ENCODE measurements at regions of chr1 and their contacts with region 1.

Region 1: DNA sequence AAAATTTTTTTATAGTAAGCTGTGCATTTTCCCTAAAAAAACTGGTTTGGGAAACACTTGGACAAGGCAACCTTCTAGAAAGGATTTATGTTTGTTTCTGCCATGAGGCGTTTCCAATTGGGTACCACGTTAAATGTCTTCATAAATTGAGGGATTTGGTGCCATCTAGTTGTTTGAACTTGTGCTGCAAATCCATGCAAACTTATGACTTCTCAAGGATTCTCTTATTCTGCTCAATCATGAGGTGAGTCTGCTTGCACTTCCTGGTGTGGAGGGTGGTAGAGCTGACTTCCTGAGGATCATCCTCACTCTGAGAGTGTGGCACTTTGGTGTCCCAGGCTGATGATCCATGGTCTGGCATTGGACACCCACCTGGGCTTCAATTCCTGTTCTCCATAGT is 123.3 kb downstream of the PCNX2 start:
- DNase-seq: peak in 1 of 2 donors; percentile 8
- ATAC-seq: peak in 3 of 8 donors; percentile 52 to 59 (median 53)
- H3K4me3 ChIP-seq: no peak overlapping the region
- H3K27ac ChIP-seq: no peak overlapping the region
- H3K4me1 ChIP-seq: no peaks in the 10 kb centered on the region
- H3K27me3 ChIP-seq: no peaks in the 10 kb centered on the region
- CTCF ChIP-seq: peak in 8 of 9 donors; percentile 14 to 66 (median 56)

Region 2: GRCh38 chr1:232635778-232636356 is 536.4 kb before region 1 on chr1:
- intact Hi-C with region 1: loop called in 8 of 10 experiments (anchors 2 to 10 kb)
- DNase-seq: no peak
- ATAC-seq: peak in 6 of 8 donors; percentile 53 to 79 (median 70)
- H3K4me3 ChIP-seq: no peak overlapping the region
- H3K27ac ChIP-seq: no peak overlapping the region
- H3K4me1 ChIP-seq: peaks cover 0 to 10% (median 3%) of the 10 kb centered on the region in 9 donors
- H3K27me3 ChIP-seq: no peaks in the 10 kb centered on the region
- CTCF ChIP-seq: peak; percentile 50 to 89 (median 85)

Region 3: DNA sequence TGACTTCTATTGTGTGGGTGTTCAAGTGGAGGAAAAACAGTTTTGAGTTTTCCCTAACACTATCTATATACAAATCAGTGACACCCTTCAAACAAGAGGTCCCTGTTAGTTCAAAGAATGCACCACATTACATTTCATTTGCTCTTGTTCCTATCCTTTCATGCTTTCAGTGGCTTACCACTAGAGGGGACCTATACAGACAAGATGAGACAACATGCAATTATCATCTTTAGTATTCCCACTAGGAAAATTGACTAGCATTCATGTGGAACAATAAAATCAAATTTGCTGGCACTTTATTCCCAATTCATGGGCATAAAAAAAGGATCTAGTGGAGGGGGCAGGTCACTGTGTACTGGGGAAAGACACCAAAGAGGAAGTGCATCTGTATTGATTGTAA is 529.0 kb before region 1 on chr1:
- intact Hi-C with region 1: loop called in 5 of 10 experiments (anchors 5 to 10 kb)
- DNase-seq: no peak
- ATAC-seq: no peak
- H3K4me3 ChIP-seq: no peak overlapping the region
- H3K27ac ChIP-seq: no peak overlapping the region
- H3K4me1 ChIP-seq: no peaks in the 10 kb centered on the region
- H3K27me3 ChIP-seq: no peaks in the 10 kb centered on the region
- CTCF ChIP-seq: peak in 3 of 9 donors; percentile 3 to 14 (median 13)

Region 4: DNA sequence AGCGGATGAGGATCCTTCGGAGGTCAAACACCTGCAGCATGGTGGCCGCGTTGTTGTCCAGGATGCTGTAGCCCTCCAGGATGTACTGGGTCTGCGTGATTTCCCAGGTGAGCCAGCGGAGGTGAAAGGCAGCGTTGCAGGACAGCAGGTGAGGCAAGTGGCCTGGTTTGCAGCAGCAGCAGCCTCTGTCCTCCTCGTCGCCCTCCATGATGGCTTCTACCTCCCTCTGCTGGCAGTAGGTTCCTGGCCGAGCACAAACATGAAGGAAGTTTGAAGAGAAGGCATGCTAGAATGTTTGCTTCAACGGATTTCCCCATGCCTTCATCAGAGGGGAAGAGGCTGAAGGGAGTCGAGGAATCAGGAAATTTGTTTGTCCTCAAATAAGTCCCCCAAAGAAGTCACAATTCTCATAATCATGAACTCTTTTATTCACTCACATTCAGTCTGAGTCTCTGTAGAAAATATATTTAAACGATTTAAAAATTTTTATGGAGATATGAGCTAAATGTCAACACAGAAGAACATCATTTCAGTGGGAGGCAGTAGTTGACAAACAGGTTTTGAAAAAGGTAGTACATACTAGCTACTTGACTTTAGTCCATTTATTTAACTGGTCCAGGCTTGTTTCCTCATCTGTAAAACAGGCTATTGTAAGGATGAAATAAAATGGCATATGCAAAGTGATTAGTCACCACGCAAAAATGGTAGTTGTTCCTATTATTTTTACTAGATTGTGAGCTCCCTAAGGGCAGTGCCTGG is 146.9 kb before region 1 on chr1:
- intact Hi-C with region 1: loop called in 3 of 10 experiments (anchors 1 to 10 kb)
- DNase-seq: peak; percentile 24 to 41
- ATAC-seq: peak in 6 of 8 donors; percentile 38 to 78 (median 59)
- H3K4me3 ChIP-seq: no peak overlapping the region
- H3K27ac ChIP-seq: no peak overlapping the region
- H3K4me1 ChIP-seq: peaks cover 0 to 15% (median 6%) of the 10 kb centered on the region in 9 donors
- H3K27me3 ChIP-seq: no peaks in the 10 kb centered on the region
- CTCF ChIP-seq: peak; percentile 21 to 73 (median 62)

Region 5: GRCh38 chr1:233057836-233058235 is 114.4 kb before region 1 on chr1:
- intact Hi-C with region 1: loop called in 1 of 10 experiments (anchors 10 kb)
- DNase-seq: no peak
- ATAC-seq: no peak
- H3K4me3 ChIP-seq: no peak overlapping the region
- H3K27ac ChIP-seq: no peak overlapping the region
- H3K4me1 ChIP-seq: peaks cover 0 to 8% (median 0%) of the 10 kb centered on the region in 9 donors
- H3K27me3 ChIP-seq: no peaks in the 10 kb centered on the region
- CTCF ChIP-seq: no peak

Measured in heart right ventricle (tissue), 16 donors.